ENCODE measurements at regions of chr2 and their contacts with region 1.

Region 1: GRCh38 chr2:3558205-3559014 is at the start of gene RNASEH1:
- DNase-seq: peak; percentile 100
- total RNA-seq, gene RNASEH1: 21.4 TPM

Region 2: GRCh38 chr2:3379647-3380534 is 178.5 kb before region 1 on chr2 and contains the start of gene TRAPPC12:
- intact Hi-C with region 1: loop called (anchors 1 kb)
- DNase-seq: peak; percentile 96
- total RNA-seq, gene TRAPPC12: 67.5 TPM

Region 3: DNA sequence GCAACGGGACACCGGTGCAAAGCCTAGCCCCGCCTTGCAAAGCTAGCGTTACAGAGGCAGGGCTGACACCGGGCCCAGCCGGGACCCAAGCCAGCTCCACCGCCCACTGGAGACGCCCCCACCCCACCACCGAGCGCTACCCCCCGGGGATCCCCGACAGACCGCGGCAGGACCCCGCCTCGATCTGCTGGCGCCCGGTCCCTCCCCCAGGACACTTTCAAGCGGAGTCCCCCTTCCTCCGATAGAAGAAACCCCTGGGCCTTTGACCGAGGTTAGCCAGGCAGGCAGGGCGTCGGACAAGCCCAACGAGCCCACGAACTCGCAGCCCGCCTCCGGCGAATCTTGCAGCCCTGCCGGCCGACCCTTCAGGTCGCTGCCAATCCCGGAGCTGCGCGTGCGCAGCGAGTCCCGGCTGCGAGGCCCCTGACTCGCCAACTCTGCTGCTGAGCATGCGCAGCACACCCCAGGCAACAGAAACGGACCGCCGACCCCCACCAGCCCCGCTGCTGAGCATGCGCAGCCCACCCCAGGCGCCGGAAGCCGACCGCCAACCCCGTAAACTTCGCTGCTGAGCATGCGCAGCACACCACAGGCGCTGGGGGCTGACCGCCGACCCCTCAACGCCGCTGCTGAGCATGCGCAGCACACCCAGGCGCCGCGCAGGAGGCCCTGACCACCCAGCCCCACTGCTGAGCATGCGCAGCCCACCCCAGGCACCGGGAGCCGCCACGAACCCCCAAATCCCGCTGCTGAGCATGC is 39.7 kb before region 1 on chr2:
- intact Hi-C with region 1: loop called (anchors 1 kb)
- DNase-seq: peak; percentile 98

Region 4: GRCh38 chr2:3575534-3576262 is 17.3 kb after region 1 on chr2:
- intact Hi-C with region 1: loop called (anchors 1 kb)
- DNase-seq: no peak

Measured in cardiac septum (tissue), 1 donor.